PC-3 (cell line): ENCODE measurements at regions of chr14 and their contacts with region 1.

Region 1: GRCh38 chr14:104746934-104747481 is 5.9 kb upstream of the SIVA1 start:
- DNase-seq: peak; percentile 31
- ATAC-seq: peak; percentile 61
- H3K4me3 ChIP-seq: no peak overlapping the region
- H3K27ac ChIP-seq: no peak overlapping the region
- H3K4me1 ChIP-seq: peaks cover 32% of the 10 kb centered on the region
- H3K27me3 ChIP-seq: no peaks in the 10 kb centered on the region
- CTCF ChIP-seq: no peak

Region 2: DNA sequence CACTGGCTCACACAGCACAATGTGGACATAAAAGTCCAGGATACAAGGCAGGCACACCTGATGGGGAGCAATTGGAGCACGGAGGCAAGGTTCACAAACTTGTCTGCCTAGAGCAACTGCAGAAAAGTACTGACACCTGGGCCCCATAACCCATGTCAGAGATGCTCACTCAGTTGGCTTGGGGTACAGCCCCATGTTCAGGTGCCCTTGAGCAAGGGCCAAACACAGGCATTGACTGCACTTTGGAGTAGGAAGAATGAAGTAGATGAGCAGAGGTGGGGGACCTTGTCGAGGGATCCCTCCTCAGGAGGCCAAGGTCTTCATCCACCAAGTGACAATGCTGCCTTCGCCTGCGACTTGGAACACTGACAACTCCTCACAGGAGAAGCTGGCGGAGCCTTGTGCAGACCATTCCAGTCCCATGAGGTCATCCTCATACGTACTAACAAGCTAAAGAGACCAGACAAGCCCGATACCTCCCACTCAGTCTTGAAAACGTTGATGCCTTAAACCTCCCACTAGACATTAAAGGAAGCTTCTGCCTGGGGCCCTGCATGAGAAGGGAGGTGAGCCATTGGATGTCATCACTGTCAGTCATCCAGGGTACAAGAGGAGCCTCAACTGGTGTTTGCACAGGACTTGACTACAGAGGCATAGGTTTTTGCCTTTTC is 209.9 kb before region 1 on chr14:
- CTCF ChIA-PET with region 1: no interaction called
- POLR2A ChIA-PET with region 1: no interaction called
- intact Hi-C with region 1: no loop called
- DNase-seq: peak; percentile 43
- ATAC-seq: no peak
- H3K4me3 ChIP-seq: no peak overlapping the region
- H3K27ac ChIP-seq: no peak overlapping the region
- H3K4me1 ChIP-seq: no peaks in the 10 kb centered on the region; the same call in 1 of the 2 replicates
- H3K27me3 ChIP-seq: peaks cover 56% of the 10 kb centered on the region
- CTCF ChIP-seq: no peak

Region 3: GRCh38 chr14:104723648-104724406 is 23.2 kb before region 1 on chr14 and contains the start of gene ADSS1:
- CTCF ChIA-PET with region 1: no interaction called
- POLR2A ChIA-PET with region 1: no interaction called
- intact Hi-C with region 1: loop called (anchors 2 kb)
- DNase-seq: peak; percentile 51
- ATAC-seq: peak; percentile 65
- H3K4me3 ChIP-seq: peak within 1 kb of the TSS; percentile 78
- H3K27ac ChIP-seq: no peak within 1 kb of the TSS
- H3K4me1 ChIP-seq: peaks cover 7% of the 10 kb centered on the region
- H3K27me3 ChIP-seq: no peaks in the 10 kb centered on the region
- CTCF ChIP-seq: peak; percentile 96
- total RNA-seq, gene ADSS1: 7.9 and 8.8 TPM in 2 replicates